ENCODE measurements at regions of chr16 and their contacts with region 1.

Region 1: DNA sequence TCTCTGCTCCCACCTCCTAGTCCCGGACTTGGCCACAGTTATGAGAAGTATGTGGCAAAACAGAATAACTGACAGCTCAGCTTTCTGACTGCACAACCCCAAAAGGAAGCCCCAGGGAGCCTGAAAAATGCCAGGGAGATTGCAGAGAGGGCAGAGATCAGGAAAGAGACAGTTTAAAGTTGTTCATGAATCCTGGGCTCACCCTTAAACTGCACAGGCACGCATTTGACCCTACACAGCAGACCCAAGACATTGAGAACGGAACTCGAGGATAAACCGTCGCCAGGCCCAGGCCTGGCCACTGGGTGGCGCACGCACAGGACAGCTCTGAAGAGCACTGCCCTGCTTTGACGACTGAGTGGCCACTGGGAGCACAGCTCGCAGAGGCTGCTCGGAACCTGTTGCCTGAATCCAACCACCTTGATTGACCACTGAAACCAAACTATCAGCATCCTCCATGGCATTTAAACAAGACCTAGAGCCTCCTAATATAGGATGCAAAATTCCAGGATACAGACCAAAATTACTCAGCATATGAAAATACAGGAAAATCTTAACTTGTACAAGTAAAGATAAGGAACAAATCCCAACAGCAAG is 114.0 kb downstream of the C16orf95 start:
- DNase-seq: peak; percentile 84
- H3K4me3 ChIP-seq: peak overlapping the region in 1 of 2 experiments; percentile 39; a peak in 1 of 4 replicates
- H3K27ac ChIP-seq: no peak overlapping the region
- H3K4me1 ChIP-seq: peaks cover 0 to 2% of the 10 kb centered on the region in 2 experiments; a peak in 1 of 4 replicates
- H3K27me3 ChIP-seq: peaks cover 19% of the 10 kb centered on the region; the same call in 1 of the 2 replicates
- CTCF ChIP-seq: peak; percentile 89
- EP300 ChIP-seq: no peak
- RAD21 ChIP-seq: peak; percentile 67

Region 2: GRCh38 chr16:87160234-87160661 is 42.9 kb before region 1 on chr16:
- CTCF ChIA-PET with region 1: no interaction called
- POLR2A ChIA-PET with region 1: no interaction called
- DNase-seq: no peak
- H3K4me3 ChIP-seq: no peak overlapping the region
- H3K27ac ChIP-seq: no peak overlapping the region
- H3K4me1 ChIP-seq: no peaks in the 10 kb centered on the region
- H3K27me3 ChIP-seq: peaks cover 53% of the 10 kb centered on the region
- CTCF ChIP-seq: no peak
- EP300 ChIP-seq: no peak
- RAD21 ChIP-seq: no peak

Region 3: GRCh38 chr16:87216474-87217275 is 13.5 kb after region 1 on chr16:
- CTCF ChIA-PET with region 1: interaction called, 18 read pairs
- POLR2A ChIA-PET with region 1: no interaction called
- DNase-seq: no peak
- H3K4me3 ChIP-seq: no peak overlapping the region
- H3K27ac ChIP-seq: no peak overlapping the region
- H3K4me1 ChIP-seq: no peaks in the 10 kb centered on the region
- H3K27me3 ChIP-seq: no peaks in the 10 kb centered on the region; the same call in 1 of the 2 replicates
- CTCF ChIP-seq: no peak
- EP300 ChIP-seq: no peak
- RAD21 ChIP-seq: no peak

Region 4: DNA sequence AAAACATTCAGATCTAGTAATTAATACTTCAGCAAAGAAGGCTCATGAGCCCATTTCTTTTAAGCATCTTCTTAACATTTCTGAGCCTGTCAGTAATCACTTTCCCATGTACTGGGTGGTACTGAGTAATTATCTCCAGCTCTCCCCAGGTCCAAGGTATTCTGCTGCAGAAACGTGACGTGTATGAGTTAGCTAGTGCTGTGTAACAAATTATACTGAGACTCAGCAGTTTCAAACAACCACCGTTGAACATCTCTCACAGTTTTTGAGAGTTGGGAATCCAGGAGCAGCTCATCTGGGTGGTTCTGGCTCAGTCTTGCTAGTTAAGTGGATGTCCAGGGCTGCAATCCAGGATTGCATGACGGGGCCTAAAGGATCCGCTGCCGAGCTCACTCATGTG is 88.8 kb after region 1 on chr16:
- CTCF ChIA-PET with region 1: interaction called, 11 read pairs
- POLR2A ChIA-PET with region 1: no interaction called
- DNase-seq: no peak
- H3K4me3 ChIP-seq: no peak overlapping the region
- H3K27ac ChIP-seq: no peak overlapping the region
- H3K4me1 ChIP-seq: no peaks in the 10 kb centered on the region
- H3K27me3 ChIP-seq: no peaks in the 10 kb centered on the region
- CTCF ChIP-seq: no peak
- EP300 ChIP-seq: no peak
- RAD21 ChIP-seq: no peak